Right ventricle myocardium inferior (tissue), 1 donor: ENCODE measurements at regions of chr10 and their contacts with region 1.

Region 1: DNA sequence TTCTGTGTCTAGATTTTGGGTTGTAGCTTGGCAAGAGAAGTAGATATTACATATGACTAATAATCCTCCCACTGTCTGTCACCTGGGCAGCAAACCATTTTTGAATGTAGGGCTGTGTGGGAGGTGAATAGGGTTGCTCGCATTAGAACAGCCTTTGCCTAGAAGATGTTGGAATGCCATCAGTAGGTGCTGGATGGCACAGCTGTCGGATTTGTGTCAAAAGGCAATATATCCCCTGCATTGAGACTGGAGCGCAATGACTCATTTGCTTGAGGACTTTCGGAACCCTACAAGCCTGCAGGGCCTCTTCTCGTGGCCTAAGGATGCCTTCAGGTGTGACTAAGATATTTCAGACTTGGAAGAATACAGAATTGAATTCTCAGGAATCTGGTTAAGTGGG is 323.9 kb downstream of the GPR158 start:
- DNase-seq: no peak
- ATAC-seq: no peak

Region 2: DNA sequence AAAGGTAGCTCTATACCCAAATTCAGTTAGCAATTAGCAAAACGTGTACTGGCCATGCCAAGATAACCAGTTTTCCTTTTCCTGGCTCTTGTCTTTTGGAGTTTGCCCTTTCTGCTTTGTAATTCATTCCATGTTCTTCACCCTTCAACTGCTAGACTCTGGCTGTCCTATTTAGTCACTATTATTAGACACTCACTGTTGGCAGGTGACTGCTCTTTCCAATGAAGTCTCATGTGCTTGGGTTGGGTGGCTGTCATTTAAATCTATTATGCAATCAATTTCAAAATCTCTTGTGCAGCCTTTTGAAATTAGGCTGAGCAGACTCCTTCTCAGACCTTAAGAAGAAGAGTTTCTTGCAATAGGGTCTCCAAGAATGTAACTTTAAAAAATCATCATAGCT is 57.4 kb before region 1 on chr10:
- intact Hi-C with region 1: loop called (anchors 5 kb)
- DNase-seq: no peak
- ATAC-seq: peak; percentile 84

Region 3: GRCh38 chr10:25522946-25523608 is 24.4 kb after region 1 on chr10:
- intact Hi-C with region 1: no loop called
- DNase-seq: no peak
- ATAC-seq: no peak

Region 4: GRCh38 chr10:26438534-26439341 is 940.1 kb after region 1 on chr10:
- intact Hi-C with region 1: no loop called
- DNase-seq: peak; percentile 80
- ATAC-seq: peak; percentile 76